BJ (cell line): ENCODE measurements at regions of chr10 and their contacts with region 1.

Region 1: DNA sequence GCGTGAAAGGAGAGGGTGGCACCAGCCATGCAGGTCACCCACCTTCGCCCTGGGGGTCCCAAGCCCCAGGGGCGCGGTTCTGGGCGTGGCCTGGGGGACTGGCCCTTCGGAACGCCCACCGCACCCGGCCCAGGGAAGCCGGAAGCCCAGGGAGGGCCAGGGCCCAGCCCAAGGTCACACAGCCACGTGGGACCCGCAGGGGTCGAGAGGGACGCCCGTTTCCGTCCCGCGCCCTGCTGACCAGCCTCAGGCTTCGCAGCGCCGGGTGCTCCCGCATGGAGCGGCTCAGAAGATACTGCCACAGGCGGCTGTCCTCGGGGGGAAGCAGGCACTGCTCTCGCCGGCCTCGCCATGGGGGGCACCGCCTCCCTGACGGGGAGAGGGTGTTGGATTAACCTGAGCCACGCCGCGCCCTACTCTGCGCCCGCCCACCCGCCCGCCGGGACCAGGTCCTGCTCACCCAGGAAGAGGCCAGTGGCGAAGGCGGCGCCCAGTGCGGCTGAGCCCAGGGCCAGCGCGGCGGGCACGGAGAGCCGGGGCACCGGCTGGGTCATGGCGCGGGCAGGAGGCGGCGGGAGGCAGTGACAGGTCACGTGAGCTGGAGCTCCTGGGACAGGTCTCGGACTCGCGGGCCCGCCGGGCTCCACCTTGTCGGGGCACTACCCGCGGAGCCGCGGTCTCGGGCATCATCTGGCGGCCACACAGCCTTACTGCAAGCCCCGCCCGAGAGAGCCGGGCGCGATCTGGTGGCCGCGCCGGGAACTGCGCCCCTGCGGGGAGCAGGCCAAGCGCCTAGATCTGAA is at the start of gene COMTD1:
- DNase-seq: no peak
- H3K4me3 ChIP-seq: peak within 1 kb of the TSS; percentile 60
- H3K27me3 ChIP-seq: no peaks in the 10 kb centered on the region; the same call in 1 of the 2 replicates
- CTCF ChIP-seq: peak; percentile 100
- polyA plus RNA-seq, gene COMTD1: 3.1 and 3.3 TPM in 2 replicates

Region 2: GRCh38 chr10:74244097-74244685 is 991.4 kb before region 1 on chr10:
- CTCF ChIA-PET with region 1: interaction called, 38 read pairs
- POLR2A ChIA-PET with region 1: no interaction called
- DNase-seq: no peak
- H3K4me3 ChIP-seq: no peak overlapping the region
- H3K27me3 ChIP-seq: no peaks in the 10 kb centered on the region
- CTCF ChIP-seq: peak; percentile 39

Region 3: DNA sequence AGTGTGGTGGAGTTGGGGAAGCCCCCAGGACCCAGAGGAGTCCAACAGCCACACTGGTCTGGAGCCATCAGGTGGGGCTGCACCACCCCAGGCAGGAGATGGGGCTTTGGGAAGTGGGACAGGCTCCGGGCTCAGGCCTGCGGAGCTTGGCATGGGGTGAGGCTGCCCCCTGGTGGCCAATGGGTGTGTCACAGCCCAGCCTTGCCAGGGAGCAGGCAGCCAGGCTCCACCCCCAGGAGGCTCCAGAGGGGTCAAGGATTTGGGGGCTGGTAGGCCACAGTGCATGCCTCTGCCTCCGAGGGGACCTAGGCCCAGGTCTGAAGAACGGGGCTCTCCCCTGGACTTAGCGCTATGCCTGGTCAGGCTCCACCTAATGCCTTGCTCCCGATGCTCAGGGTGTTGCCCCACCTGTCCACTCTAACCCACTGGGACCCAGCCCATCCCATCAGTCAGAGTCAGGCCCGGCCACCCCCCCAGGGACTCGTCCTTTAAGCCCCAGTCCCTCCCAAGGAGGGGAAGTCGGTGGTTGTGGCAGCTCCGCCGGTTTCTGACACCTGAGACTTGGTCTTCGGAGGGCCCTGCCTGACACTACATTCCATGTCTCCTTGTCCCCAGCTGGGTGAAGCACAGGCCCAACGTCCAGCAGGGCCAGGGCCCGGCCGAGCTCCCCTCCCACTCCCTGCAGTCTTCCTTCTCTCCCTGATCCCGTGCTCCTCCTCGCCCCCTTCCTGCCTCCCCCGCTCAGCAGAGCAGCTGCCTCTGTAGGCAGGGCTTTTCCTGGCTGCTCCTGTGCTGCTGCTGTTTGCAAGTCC is 135.4 kb before region 1 on chr10:
- CTCF ChIA-PET with region 1: interaction called, 13 read pairs
- POLR2A ChIA-PET with region 1: no interaction called
- DNase-seq: no peak
- H3K4me3 ChIP-seq: no peak overlapping the region
- H3K27me3 ChIP-seq: no peaks in the 10 kb centered on the region
- CTCF ChIP-seq: peak; percentile 94

Region 4: GRCh38 chr10:75111367-75111906 is 124.1 kb before region 1 on chr10 and contains the start of gene SAMD8:
- CTCF ChIA-PET with region 1: interaction called, 17 read pairs
- POLR2A ChIA-PET with region 1: no interaction called
- DNase-seq: peak; percentile 78
- H3K4me3 ChIP-seq: peak within 1 kb of the TSS; percentile 95
- H3K27me3 ChIP-seq: no peaks in the 10 kb centered on the region
- CTCF ChIP-seq: 0 out of 2 replicates have a peak, but pooled peaks have one; percentile 27
- polyA plus RNA-seq, gene SAMD8: 14.2 and 28.0 TPM in 2 replicates

Region 5: DNA sequence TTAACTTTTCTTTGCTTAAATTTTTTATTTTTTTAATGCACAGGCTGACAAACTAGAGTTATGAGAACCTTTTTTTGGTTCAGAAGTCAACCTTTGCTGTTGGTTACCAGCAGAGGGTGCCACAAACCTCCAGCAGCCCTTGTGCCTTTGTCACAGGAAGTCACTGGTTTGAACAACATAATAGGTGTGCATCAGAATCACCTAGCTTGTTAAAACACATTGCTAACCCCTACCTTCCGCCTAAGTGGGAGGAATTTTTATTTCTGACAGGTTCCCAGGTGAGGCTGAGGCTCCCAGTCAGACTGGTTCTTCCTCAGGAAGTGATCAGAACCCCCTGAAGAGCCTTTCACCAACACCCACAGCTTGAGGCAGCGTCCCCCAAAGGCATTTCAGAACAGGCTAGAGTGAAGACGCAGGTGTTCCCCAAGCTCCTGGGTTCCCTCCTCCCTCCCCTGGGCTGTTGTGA is 47.6 kb before region 1 on chr10:
- CTCF ChIA-PET with region 1: interaction called, 292 read pairs
- POLR2A ChIA-PET with region 1: interaction called, 9 read pairs
- DNase-seq: no peak
- H3K4me3 ChIP-seq: no peak overlapping the region
- H3K27me3 ChIP-seq: no peaks in the 10 kb centered on the region
- CTCF ChIP-seq: peak; percentile 84

Region 6: DNA sequence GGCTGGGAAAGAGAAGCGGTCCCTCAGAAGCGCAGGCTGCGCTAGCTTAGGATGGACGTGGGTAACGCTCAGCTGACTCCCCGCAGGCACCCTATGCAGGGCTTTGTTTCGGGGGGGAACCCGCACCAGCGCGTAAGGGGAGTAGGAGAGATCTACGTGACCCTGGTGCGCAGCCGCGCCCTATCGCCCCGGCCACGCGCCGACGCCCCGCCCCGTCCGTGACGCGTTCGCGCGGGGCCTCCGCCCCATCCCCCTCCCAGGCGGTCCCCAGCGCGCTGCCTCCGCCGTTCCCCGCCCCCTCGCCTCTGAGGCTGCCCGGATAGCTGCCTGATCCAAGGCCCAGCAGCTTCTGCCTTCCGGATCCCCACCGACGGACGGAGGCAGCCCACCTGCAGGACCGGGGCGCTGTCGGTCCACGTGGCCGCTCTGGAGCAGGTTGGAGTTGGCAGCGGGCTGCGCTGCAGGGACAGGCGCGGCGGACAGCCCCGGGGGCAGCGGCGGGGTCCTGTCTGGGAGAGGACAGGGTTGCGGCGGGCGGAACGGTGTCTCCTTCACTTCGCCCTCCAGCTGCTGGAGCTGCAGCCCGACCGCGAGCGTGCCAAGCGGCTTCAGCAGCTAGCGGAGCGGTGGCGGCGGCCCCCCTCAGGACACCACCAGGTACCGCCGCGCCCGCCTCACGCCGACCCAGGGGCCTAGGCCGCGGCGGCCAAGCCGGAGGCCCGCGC is 25.1 kb before region 1 on chr10 and contains the start of gene VDAC2:
- CTCF ChIA-PET with region 1: interaction called, 19 read pairs
- POLR2A ChIA-PET with region 1: no interaction called
- DNase-seq: no peak
- H3K4me3 ChIP-seq: peak within 1 kb of the TSS; percentile 79
- H3K27me3 ChIP-seq: no peaks in the 10 kb centered on the region
- CTCF ChIP-seq: no peak
- polyA plus RNA-seq, gene VDAC2: 80.9 and 149 TPM in 2 replicates

Region 7: DNA sequence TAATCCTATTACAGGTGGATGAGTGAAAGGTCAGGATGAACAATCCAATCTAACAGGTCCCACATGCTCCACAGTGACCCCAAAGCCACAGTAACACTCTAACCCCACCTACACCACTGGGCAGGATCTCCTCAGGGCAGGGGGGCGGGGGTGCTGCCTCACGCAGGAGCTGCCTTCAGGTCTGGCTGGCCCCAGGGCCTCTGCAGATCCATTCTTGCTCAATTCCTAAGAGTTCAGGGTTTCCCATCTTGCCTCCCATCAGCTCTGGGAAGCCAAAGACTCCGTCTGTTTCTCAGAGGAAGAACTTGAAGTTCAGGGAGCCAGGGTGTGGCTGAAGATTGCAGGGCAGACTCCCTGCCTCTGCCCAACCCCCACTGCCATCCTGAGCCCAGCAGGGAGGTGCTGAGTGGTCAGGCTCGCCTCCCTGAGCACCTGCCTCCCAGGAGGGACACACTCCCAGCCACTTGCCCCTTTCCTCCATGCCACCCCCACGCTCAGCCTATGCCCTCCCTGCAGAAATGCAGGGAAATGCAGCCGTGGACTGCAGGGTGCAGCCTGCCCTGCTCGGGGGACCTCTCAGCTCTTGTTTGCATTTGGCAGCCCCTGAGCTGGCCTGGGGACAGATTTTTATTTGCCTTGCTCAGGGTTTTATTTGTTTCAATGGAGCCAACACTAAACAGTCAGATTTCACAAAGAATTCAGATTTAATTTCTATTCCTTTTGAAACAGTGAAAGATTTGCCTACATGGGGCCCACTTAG is 10.1 kb after region 1 on chr10:
- CTCF ChIA-PET with region 1: interaction called, 33 read pairs
- POLR2A ChIA-PET with region 1: no interaction called
- DNase-seq: no peak
- H3K4me3 ChIP-seq: no peak overlapping the region
- H3K27me3 ChIP-seq: 0 out of 2 replicates have a peak, but pooled peaks cover 3% of the 10 kb centered on the region
- CTCF ChIP-seq: no peak

Region 8: GRCh38 chr10:76051007-76051936 is 815.7 kb after region 1 on chr10:
- CTCF ChIA-PET with region 1: no interaction called
- POLR2A ChIA-PET with region 1: no interaction called
- DNase-seq: no peak
- H3K4me3 ChIP-seq: no peak overlapping the region
- H3K27me3 ChIP-seq: peaks cover 5% of the 10 kb centered on the region
- CTCF ChIP-seq: no peak